ENCODE measurements at regions of chr11 and their contacts with region 1.

Region 1: GRCh38 chr11:63635762-63636465 is 21.7 kb upstream of the PLAAT3 start:
- DNase-seq: peak; percentile 63 to 84
- H3K4me3 ChIP-seq: no peak overlapping the region
- H3K27ac ChIP-seq: no peak overlapping the region
- H3K4me1 ChIP-seq: peaks cover 5 to 30% (median 9%) of the 10 kb centered on the region in 4 donors
- H3K27me3 ChIP-seq: no peaks in the 10 kb centered on the region
- CTCF ChIP-seq: peak in 5 of 7 experiments; percentile 60 to 81 (median 78)
- EP300 ChIP-seq: no peak
- POLR2A ChIP-seq: no peak

Region 2: DNA sequence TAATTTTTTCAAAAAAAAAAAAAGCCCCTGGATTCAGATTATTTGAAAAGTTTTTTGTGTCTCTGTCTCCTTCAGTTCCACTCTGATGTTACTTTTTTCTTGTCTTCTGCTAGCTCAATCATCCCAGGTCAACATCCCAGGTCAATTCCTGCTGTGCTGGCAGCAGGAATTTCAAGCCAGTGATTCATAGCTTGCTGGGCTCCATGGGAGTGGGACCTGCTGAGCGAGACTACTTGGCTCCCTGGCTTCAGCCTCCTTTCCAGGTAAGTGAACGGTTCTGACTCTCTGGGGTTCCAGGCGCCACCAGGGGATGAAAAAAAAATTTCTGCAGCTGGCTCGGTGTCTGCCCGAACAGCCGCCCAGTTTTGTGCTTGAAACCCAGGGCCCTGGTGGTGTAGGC is 176.3 kb before region 1 on chr11:
- intact Hi-C with region 1: no loop called
- DNase-seq: no peak
- H3K4me3 ChIP-seq: no peak overlapping the region
- H3K27ac ChIP-seq: no peak overlapping the region
- H3K4me1 ChIP-seq: no peaks in the 10 kb centered on the region
- H3K27me3 ChIP-seq: no peaks in the 10 kb centered on the region
- CTCF ChIP-seq: no peak
- EP300 ChIP-seq: no peak
- POLR2A ChIP-seq: no peak

Region 3: GRCh38 chr11:63480039-63480438 is 155.9 kb before region 1 on chr11:
- intact Hi-C with region 1: loop called (anchors 5 kb)
- DNase-seq: no peak
- H3K4me3 ChIP-seq: no peak overlapping the region
- H3K27ac ChIP-seq: no peak overlapping the region
- H3K4me1 ChIP-seq: peaks cover 0 to 7% (median 3%) of the 10 kb centered on the region in 4 donors
- H3K27me3 ChIP-seq: no peaks in the 10 kb centered on the region
- CTCF ChIP-seq: no peak
- EP300 ChIP-seq: no peak
- POLR2A ChIP-seq: no peak